Activated CD4-positive, alpha-beta T cell treated with anti-CD3 and anti-CD28 coated beads for 36 hours (primary cell): ENCODE measurements at regions of chr9 and their contacts with region 1.

Region 1: GRCh38 chr9:76116913-76117312 is 226.4 kb downstream of the PCSK5 start:
- DNase-seq: peak; percentile 10
- ATAC-seq: peak; percentile 43
- H3K4me3 Mint-ChIP-seq: no peak overlapping the region
- H3K27ac Mint-ChIP-seq: no peak overlapping the region
- H3K4me1 Mint-ChIP-seq: peaks cover 13% of the 10 kb centered on the region
- H3K27me3 Mint-ChIP-seq: no peaks in the 10 kb centered on the region

Region 2: DNA sequence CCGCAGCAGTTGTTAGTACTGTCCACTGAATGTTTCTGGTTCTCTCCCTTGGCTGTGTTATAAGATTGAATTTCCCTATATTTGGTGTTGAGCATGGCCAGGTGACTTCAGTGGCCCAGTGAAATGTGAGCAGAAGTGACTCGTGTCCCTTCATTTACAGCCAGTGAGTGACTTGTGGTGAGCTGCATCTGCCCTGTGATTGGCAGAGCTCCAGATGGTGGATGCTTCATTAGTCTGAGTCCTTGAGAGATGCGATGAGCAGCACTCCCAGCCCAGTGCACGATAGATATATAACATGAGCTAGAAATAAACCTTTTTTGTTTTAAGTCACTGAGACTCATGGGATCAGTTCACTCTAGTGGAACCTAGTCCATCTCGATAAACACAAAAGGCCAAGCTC is 207.1 kb before region 1 on chr9:
- CTCF ChIA-PET with region 1: no interaction called
- POLR2A ChIA-PET with region 1: no interaction called
- intact Hi-C with region 1: loop called in 1 of 2 experiments (anchors 1 kb)
- DNase-seq: peak; percentile 14
- ATAC-seq: no peak
- H3K4me3 Mint-ChIP-seq: no peak overlapping the region
- H3K27ac Mint-ChIP-seq: no peak overlapping the region
- H3K4me1 Mint-ChIP-seq: peaks cover 48% of the 10 kb centered on the region
- H3K27me3 Mint-ChIP-seq: no peaks in the 10 kb centered on the region

Region 3: DNA sequence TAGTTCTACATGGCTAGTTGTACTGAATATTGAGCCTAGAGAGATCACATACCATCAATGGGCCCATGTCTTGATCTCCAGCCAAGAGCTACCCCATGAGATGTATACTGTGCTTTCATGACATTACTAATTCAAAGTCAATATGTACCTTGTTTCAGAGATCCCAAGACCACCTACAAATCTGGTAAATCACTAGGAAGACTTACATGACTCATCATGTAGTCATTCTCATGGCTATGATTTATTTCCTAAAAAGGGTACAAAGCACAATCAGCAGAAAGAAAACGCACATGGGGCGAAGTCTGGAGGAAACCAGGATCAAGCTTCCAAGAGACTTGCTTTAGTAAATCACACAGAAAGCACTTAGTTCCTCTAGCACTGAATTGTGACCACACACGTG is 123.5 kb before region 1 on chr9:
- CTCF ChIA-PET with region 1: no interaction called
- POLR2A ChIA-PET with region 1: no interaction called
- intact Hi-C with region 1: loop called in 1 of 2 experiments (anchors 5 kb)
- DNase-seq: no peak
- ATAC-seq: peak; percentile 24
- H3K4me3 Mint-ChIP-seq: no peak overlapping the region
- H3K27ac Mint-ChIP-seq: no peak overlapping the region
- H3K4me1 Mint-ChIP-seq: peaks cover 53% of the 10 kb centered on the region
- H3K27me3 Mint-ChIP-seq: no peaks in the 10 kb centered on the region

Region 4: GRCh38 chr9:76023715-76024195 is 93.2 kb before region 1 on chr9:
- CTCF ChIA-PET with region 1: no interaction called
- POLR2A ChIA-PET with region 1: no interaction called
- intact Hi-C with region 1: loop called in 1 of 2 experiments (anchors 5 kb)
- DNase-seq: peak; percentile 63
- ATAC-seq: peak; percentile 83
- H3K4me3 Mint-ChIP-seq: peak overlapping the region; percentile 56
- H3K27ac Mint-ChIP-seq: peak overlapping the region; percentile 88
- H3K4me1 Mint-ChIP-seq: peaks cover 89% of the 10 kb centered on the region
- H3K27me3 Mint-ChIP-seq: no peaks in the 10 kb centered on the region

Region 5: DNA sequence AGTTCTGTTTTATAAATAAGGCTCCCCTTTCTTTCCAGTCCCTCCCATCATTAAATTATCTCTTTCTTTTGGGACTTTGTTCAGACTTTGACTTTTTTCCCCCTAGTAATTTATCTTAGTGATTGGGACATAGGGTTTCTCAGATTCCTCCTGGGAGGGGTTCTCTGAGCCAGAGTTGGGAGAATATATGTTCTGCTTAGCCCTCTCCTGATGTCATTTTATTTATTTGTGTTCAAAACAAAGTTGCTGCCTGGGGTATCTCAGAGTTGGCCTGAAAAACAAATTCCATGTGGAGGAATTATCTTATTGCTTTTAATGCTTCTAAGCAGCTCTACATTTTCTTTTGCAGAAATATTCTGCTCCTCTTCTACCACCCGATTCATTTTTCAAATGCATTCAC is 15.4 kb before region 1 on chr9:
- CTCF ChIA-PET with region 1: interaction called, 13 read pairs
- POLR2A ChIA-PET with region 1: no interaction called
- intact Hi-C with region 1: no loop called
- DNase-seq: no peak
- ATAC-seq: no peak
- H3K4me3 Mint-ChIP-seq: no peak overlapping the region
- H3K27ac Mint-ChIP-seq: no peak overlapping the region
- H3K4me1 Mint-ChIP-seq: peaks cover 15% of the 10 kb centered on the region
- H3K27me3 Mint-ChIP-seq: no peaks in the 10 kb centered on the region

Region 6: GRCh38 chr9:76181020-76181641 is 64.2 kb after region 1 on chr9:
- CTCF ChIA-PET with region 1: no interaction called
- POLR2A ChIA-PET with region 1: no interaction called
- intact Hi-C with region 1: loop called (anchors 2 to 5 kb)
- DNase-seq: peak; percentile 7
- ATAC-seq: peak; percentile 93
- H3K4me3 Mint-ChIP-seq: no peak overlapping the region
- H3K27ac Mint-ChIP-seq: no peak overlapping the region
- H3K4me1 Mint-ChIP-seq: peaks cover 10% of the 10 kb centered on the region
- H3K27me3 Mint-ChIP-seq: no peaks in the 10 kb centered on the region